Prostate gland (tissue), 2 donors: ENCODE measurements at regions of chr11 and their contacts with region 1.

Region 1: DNA sequence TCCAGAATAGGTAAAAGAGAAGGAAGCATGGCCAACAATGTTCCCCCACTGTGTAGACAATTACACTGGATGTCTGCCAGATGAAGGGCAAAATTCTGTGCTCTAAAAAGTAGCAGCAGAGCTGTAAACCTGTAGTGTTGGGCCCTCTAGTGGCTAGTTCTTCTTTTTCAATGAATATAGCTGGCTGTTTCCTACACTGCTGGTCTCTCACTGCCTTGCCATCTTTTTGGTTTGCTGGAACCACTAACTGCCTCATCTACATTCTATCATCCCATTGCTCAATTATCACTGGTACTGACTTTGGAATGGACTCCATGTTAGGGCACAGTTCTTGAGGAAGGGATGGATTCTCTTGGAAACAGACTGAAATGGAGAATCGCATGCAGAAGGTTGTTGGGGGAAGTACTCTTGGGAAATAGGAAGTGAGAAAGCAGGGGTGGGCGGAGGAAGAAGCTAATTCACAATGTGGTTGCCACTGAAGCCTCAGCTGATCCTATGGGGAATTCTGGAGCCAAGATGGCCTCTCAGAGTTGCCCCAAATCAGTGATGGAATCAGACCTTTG is 17.9 kb downstream of the KCNE3 start:
- DNase-seq: peak; percentile 72
- H3K4me3 ChIP-seq: no peak overlapping the region
- H3K27ac ChIP-seq: no peak overlapping the region
- H3K4me1 ChIP-seq: peaks cover 4% of the 10 kb centered on the region
- H3K27me3 ChIP-seq: no peaks in the 10 kb centered on the region
- CTCF ChIP-seq: peak in 3 of 4 experiments; percentile 80 to 87 (median 84)
- POLR2A ChIP-seq: no peak

Region 2: GRCh38 chr11:73965076-73965860 is 484.2 kb before region 1 on chr11:
- intact Hi-C with region 1: loop called (anchors 2 kb)
- DNase-seq: no peak
- H3K4me3 ChIP-seq: no peak overlapping the region
- H3K27ac ChIP-seq: no peak overlapping the region
- H3K4me1 ChIP-seq: no peaks in the 10 kb centered on the region
- H3K27me3 ChIP-seq: no peaks in the 10 kb centered on the region
- CTCF ChIP-seq: no peak
- POLR2A ChIP-seq: no peak

Region 3: DNA sequence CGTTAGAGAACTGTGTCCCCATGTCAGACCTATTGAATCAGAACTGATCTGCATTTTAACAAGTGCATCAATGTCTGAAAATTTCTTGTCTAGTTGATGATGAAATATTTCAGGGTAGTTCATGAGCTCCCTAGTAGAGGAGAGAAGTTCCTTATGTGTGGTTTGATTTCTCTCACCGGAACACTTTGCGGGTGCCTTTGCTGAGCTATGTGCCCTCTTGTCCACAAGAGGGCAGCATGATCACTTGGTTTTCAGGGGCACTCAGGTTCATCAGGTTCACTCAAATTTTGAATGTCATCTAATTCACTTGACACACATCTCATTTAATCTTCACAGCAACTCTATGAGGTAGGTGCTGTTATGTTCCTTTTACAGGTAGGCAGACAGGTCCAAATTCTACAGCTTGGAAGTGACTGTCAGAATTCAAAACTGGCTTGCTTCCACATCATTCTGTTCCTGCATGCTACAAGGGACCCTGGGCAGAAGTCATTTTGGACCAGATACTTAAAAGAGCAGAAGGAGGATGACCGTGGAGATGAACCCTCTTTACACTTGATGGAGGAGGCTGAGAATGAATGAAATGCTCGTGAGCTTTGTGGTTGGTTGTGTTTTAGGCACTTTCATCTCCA is 193.6 kb before region 1 on chr11:
- intact Hi-C with region 1: loop called (anchors 2 kb)
- DNase-seq: peak; percentile 48
- H3K4me3 ChIP-seq: no peak overlapping the region
- H3K27ac ChIP-seq: no peak overlapping the region
- H3K4me1 ChIP-seq: peaks cover 11% of the 10 kb centered on the region
- H3K27me3 ChIP-seq: no peaks in the 10 kb centered on the region
- CTCF ChIP-seq: peak; percentile 59 to 88 (median 86)
- POLR2A ChIP-seq: no peak

Region 4: GRCh38 chr11:74321487-74322188 is 127.8 kb before region 1 on chr11:
- intact Hi-C with region 1: loop called (anchors 5 kb)
- DNase-seq: no peak
- H3K4me3 ChIP-seq: no peak overlapping the region
- H3K27ac ChIP-seq: no peak overlapping the region
- H3K4me1 ChIP-seq: no peaks in the 10 kb centered on the region
- H3K27me3 ChIP-seq: no peaks in the 10 kb centered on the region
- CTCF ChIP-seq: peak in 2 of 4 experiments; percentile 40 to 41
- POLR2A ChIP-seq: no peak

Region 5: GRCh38 chr11:74388678-74389327 is 60.6 kb before region 1 on chr11:
- intact Hi-C with region 1: loop called (anchors 2 kb)
- DNase-seq: peak; percentile 83
- H3K4me3 ChIP-seq: no peak overlapping the region
- H3K27ac ChIP-seq: no peak overlapping the region
- H3K4me1 ChIP-seq: no peaks in the 10 kb centered on the region
- H3K27me3 ChIP-seq: no peaks in the 10 kb centered on the region
- CTCF ChIP-seq: peak in 3 of 4 experiments; percentile 74 to 79 (median 78)
- POLR2A ChIP-seq: no peak

Region 6: DNA sequence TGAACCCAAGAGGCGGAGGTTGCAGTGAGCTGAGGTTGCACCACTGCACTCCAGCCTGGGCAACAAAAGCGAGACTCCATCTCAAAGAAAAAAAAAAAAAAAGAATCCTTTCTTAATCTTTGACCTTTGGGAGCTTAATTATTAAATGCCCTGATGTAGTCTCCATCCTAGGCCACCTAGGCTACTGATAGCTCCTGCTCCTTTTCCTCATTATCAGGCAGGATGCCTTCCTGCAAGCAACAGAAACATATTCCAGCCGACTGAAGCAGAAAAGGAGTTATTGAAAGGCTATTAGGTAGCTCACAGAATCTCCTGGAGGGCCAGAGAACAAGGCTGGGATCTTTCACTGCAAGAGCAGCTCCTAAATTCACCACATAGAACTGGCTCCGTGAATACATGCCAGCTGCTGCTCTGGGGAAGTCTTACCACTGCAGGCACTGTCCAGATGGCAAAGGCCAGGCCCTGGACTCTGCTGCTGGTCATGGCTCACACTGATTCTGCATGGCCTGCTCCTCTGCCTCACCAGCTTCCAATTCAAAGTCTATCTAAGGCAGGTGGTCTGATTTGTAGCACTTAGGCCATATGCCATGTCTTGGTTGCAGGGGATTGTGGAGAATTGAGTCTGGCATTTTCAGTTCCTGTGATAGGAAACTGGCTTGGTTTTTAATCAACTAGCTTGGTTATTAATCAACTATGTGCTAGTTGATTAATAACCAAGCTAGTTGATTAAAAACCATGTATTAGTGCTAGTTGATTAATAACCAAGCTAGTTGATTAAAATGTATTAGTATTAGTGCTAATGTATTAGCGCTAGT is 116.9 kb after region 1 on chr11:
- intact Hi-C with region 1: loop called (anchors 2 kb)
- DNase-seq: no peak
- H3K4me3 ChIP-seq: no peak overlapping the region
- H3K27ac ChIP-seq: no peak overlapping the region
- H3K4me1 ChIP-seq: no peaks in the 10 kb centered on the region
- H3K27me3 ChIP-seq: no peaks in the 10 kb centered on the region
- CTCF ChIP-seq: no peak
- POLR2A ChIP-seq: no peak

Region 7: DNA sequence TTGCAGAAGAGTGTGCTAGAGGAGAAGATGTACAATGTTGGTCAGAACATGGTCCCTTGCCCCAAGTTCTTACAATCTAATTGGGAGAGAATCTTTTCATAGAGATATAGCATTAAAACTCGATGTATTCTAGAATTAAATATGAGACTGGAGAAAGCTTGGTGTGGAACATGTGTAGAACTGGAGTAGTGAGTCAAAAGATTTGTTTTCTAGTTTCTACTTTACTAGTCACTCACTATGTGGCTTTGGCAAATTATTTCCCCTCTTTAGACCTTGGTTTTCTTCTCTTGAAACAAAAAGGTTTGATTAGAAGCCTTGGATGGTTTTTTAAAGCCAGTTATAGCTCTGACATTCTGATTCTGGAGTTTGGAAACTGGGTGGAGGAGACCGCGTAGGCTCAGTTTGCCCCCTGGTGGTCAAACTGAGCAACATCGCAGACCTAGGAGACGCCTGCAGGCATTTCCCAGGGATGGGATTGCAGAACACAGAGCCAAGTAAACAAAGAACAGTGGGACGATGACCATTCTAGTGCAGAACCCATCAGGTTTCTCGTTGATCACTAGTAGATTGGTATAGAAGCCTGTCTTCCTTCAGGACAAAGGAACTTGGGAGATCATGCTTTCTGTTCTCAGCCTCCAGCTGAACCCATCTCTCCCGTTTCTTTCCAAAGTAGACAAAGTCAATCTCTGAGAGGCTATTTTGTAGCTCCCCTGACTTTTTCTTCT is 290.3 kb after region 1 on chr11:
- intact Hi-C with region 1: loop called (anchors 10 kb)
- DNase-seq: peak; percentile 24
- H3K4me3 ChIP-seq: no peak overlapping the region
- H3K27ac ChIP-seq: no peak overlapping the region
- H3K4me1 ChIP-seq: no peaks in the 10 kb centered on the region
- H3K27me3 ChIP-seq: no peaks in the 10 kb centered on the region
- CTCF ChIP-seq: peak; percentile 71 to 85 (median 76)
- POLR2A ChIP-seq: no peak